Gastrocnemius medialis (tissue), 4 donors: ENCODE measurements at regions of chr2 and their contacts with region 1.

Region 1: DNA sequence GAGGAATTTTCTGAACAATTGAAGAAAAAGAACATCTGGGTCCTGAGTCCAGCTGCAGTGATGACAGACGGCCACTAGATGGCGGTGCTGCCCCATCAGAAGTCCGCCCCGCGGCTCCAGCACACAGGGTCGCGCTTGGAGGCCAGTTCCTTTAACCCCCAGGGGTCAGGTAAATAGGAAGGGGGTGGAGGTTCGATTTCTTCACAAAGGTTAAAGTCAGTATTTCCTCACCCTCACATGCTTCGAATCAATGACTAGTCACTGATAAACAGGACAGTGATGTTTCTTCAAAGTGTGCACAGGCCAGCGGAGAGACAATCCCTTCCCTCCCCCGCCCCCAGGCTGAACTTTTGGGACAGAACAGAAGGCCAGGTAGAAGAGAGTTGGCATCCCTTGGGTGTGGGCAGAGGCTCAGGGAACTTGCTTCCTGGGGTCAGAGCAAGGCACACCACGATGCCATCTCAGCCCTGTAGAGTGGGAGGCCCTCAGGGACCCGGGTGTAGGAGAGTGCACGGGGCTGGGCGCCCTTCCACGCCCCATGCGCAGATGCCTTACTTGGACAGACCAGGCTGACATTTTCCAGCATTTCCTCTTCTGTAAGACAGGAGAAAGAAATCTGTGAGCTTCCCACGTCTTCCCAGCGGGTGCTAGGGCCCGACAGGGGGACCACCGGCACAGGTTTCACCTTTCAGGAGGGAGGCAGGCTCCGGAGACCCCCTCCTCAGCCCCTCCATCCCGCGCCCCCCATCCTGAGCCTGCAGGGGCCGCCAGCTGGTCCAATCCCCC is 722 bp downstream of the APOB start:
- DNase-seq: peak in 1 of 2 donors; percentile 33
- ATAC-seq: peak; percentile 25 to 32
- H3K4me3 ChIP-seq: peak overlapping the region; percentile 21 to 33 (median 29)
- H3K27ac ChIP-seq: no peak overlapping the region
- H3K4me1 ChIP-seq: peaks cover 14 to 16% of the 10 kb centered on the region in 2 donors
- H3K27me3 ChIP-seq: no peaks in the 10 kb centered on the region
- CTCF ChIP-seq: peak; percentile 93 to 99 (median 95)
- POLR2A ChIP-seq: no peak

Region 2: DNA sequence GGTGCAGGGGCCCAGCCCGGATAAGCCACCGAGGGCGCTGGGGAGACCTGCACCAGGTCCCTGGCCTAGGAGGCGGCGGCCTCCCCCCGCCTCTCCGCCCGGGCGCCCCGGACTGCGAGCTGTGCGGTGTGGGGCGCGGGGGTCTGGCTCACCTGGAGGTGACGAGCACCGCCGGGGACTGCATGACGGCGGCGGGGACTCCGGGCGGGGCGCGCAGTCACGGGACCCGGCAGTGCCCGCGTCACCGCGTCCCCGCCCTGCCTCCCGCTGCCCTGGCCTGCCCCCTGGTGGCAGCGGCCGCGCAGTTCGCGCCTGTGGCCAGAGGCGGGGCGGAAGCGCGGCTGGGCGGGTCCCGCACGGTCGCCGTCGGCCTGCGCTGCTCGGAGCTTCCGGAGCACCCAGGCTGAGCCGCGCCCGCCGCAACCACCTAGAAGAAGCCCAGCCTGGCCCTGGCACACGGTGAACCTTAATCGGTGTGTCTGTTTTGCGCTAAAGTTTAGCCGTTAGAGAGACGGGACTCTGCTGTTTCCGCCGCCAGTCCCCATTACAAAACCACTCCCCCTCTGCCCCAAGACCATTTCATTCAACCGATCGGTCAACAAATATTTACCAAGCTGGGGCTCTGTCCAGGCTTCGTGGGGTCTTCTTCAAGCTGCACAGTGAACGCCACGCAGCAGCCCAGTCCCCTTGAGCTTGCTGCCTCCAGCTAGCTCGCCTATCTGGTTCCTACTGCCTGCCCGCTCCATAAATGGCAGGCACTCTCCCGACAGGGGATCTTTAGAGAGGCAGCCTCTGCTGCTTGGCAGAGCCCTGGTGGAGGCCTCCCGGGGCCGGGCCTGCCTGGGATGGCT is 392.0 kb before region 1 on chr2 and contains the start of gene HS1BP3:
- in situ Hi-C with region 1: no loop called
- intact Hi-C with region 1: loop called (anchors 5 kb)
- DNase-seq: peak; percentile 67 to 76
- ATAC-seq: peak; percentile 89 to 93
- H3K4me3 ChIP-seq: peak within 1 kb of the TSS; percentile 73 to 99 (median 94)
- H3K27ac ChIP-seq: peak within 1 kb of the TSS; percentile 78 to 92 (median 88)
- H3K4me1 ChIP-seq: peaks cover 15 to 18% of the 10 kb centered on the region in 2 donors
- H3K27me3 ChIP-seq: no peaks in the 10 kb centered on the region
- CTCF ChIP-seq: peak in 4 of 5 experiments; percentile 98 to 100 (median 99)
- POLR2A ChIP-seq: peak; percentile 81 to 83
- total RNA-seq, gene HS1BP3: 16.6 to 26.9 (median 19.4) TPM

Region 3: DNA sequence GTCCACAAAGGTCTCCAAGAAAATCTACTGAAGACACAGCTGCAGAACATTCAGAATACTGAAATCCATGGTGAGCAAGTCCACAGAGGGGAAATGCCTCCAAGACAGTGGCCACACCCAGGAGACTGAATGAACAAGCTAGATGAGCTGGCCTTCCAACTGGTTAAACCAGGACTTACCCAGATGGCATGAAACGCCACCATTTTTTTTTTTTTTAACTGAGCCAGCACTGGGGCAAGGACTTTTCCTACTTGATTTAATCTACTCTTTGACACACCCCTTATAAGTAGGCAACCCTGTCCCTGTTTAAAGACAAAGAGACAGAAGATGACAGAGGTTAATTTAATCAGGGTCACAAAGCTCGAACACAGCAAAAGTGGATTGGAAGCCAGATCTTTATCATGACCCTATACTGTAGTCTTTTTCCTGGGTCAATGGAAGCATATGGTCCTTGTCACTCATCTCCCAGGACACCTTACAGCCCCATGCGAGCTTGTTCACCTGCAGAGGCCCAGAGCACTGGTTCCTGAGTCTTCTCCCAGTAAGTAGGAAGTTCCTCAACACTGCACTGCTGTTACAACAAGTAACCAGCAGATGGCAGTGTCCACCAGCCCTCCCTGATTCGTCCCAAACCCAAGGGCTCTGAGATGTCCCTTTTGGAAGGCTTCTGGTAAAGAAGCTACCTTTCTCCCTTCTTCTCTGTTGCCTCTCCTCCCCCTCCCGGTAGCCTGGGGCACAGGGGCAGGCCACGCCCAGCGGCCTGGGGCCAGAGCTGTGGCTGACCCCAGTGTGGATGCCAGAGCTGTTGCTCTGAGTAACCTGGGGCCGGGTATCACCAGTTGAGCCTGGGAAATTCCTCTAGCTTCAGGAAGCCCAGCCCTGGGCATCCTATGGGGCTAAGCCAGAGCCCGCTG is 381.8 kb before region 1 on chr2:
- in situ Hi-C with region 1: no loop called
- intact Hi-C with region 1: loop called (anchors 5 kb)
- DNase-seq: peak; percentile 35 to 57
- ATAC-seq: peak; percentile 86 to 87
- H3K4me3 ChIP-seq: no peak overlapping the region
- H3K27ac ChIP-seq: no peak overlapping the region
- H3K4me1 ChIP-seq: peaks cover 0 to 13% of the 10 kb centered on the region in 2 donors
- H3K27me3 ChIP-seq: peaks cover 38 to 43% (median 42%) of the 10 kb centered on the region in 3 donors
- CTCF ChIP-seq: peak; percentile 84 to 97 (median 91)
- POLR2A ChIP-seq: no peak

Region 4: GRCh38 chr2:21118302-21118920 is 75.3 kb after region 1 on chr2:
- in situ Hi-C with region 1: loop called in 3 of 4 experiments (anchors 5 kb)
- intact Hi-C with region 1: loop called (anchors 1 kb)
- DNase-seq: peak in 1 of 2 donors; percentile 27
- ATAC-seq: peak; percentile 36 to 49
- H3K4me3 ChIP-seq: no peak overlapping the region
- H3K27ac ChIP-seq: no peak overlapping the region
- H3K4me1 ChIP-seq: no peaks in the 10 kb centered on the region
- H3K27me3 ChIP-seq: no peaks in the 10 kb centered on the region
- CTCF ChIP-seq: peak; percentile 25 to 50 (median 48)
- POLR2A ChIP-seq: no peak

Region 5: GRCh38 chr2:21123473-21124393 is 80.6 kb after region 1 on chr2 and contains the start of gene TDRD15:
- in situ Hi-C with region 1: loop called in 3 of 4 experiments (anchors 5 kb)
- intact Hi-C with region 1: loop called (anchors 1 kb)
- DNase-seq: no peak
- ATAC-seq: no peak
- H3K4me3 ChIP-seq: peak within 1 kb of the TSS in 1 of 4 donors; percentile 27
- H3K27ac ChIP-seq: no peak within 1 kb of the TSS
- H3K4me1 ChIP-seq: no peaks in the 10 kb centered on the region
- H3K27me3 ChIP-seq: no peaks in the 10 kb centered on the region
- CTCF ChIP-seq: no peak
- POLR2A ChIP-seq: no peak
- total RNA-seq, gene TDRD15: 0.68 TPM in 1 of 4 donors, not detected in the others

Region 6: DNA sequence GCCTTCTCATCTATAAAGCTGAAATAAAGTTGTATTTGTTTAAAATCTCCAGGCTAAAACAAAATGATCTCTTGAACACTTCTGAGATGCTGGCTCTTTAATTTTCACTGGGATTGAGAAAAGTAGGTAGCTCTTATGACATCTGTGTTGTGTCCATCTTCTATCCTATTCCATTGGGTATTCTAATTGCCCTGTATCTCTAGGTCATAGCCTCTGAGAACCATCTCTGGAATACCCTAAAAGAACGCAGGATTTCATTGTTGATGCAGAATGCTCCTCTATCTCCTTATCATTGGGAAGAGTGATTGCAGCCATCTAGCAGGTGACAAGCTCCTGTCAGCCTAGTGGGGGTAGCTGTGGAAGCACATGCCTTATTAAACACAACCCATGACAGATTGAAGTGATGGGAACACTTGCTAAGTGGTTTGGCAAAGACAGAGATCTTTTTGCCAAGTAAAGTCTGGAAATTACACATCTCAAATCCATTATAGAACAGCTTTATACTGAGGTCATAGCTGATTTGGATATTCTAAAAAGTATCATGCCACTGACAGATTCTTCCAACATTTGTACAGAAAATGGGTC is 258.8 kb after region 1 on chr2:
- in situ Hi-C with region 1: loop called in 1 of 4 experiments (anchors 10 kb)
- intact Hi-C with region 1: no loop called
- DNase-seq: no peak
- ATAC-seq: no peak
- H3K4me3 ChIP-seq: no peak overlapping the region
- H3K27ac ChIP-seq: no peak overlapping the region
- H3K4me1 ChIP-seq: no peaks in the 10 kb centered on the region
- H3K27me3 ChIP-seq: no peaks in the 10 kb centered on the region
- CTCF ChIP-seq: no peak
- POLR2A ChIP-seq: no peak

Region 7: GRCh38 chr2:21317131-21317530 is 274.0 kb after region 1 on chr2:
- in situ Hi-C with region 1: loop called in 2 of 4 experiments (anchors 10 kb)
- intact Hi-C with region 1: loop called (anchors 1 kb)
- DNase-seq: no peak
- ATAC-seq: no peak
- H3K4me3 ChIP-seq: no peak overlapping the region
- H3K27ac ChIP-seq: no peak overlapping the region
- H3K4me1 ChIP-seq: no peaks in the 10 kb centered on the region
- H3K27me3 ChIP-seq: no peaks in the 10 kb centered on the region
- CTCF ChIP-seq: peak in 4 of 5 experiments; percentile 18 to 61 (median 48)
- POLR2A ChIP-seq: no peak